ENCODE measurements at regions of chr9 and their contacts with region 1.

Region 1: GRCh38 chr9:120693700-120694008 is 20.6 kb downstream of the MEGF9 start:
- DNase-seq: no peak
- H3K4me3 Mint-ChIP-seq: no peak overlapping the region
- H3K27ac Mint-ChIP-seq: no peak overlapping the region
- H3K4me1 Mint-ChIP-seq: peaks cover 36% of the 10 kb centered on the region
- H3K27me3 Mint-ChIP-seq: no peaks in the 10 kb centered on the region

Region 2: GRCh38 chr9:120714088-120714845 is 20.6 kb after region 1 on chr9 and contains the start of gene MEGF9:
- CTCF ChIA-PET with region 1: no interaction called
- POLR2A ChIA-PET with region 1: no interaction called
- intact Hi-C with region 1: loop called (anchors 1 kb)
- DNase-seq: peak; percentile 98
- H3K4me3 Mint-ChIP-seq: peak within 1 kb of the TSS; percentile 84
- H3K27ac Mint-ChIP-seq: peak within 1 kb of the TSS; percentile 65
- H3K4me1 Mint-ChIP-seq: peaks cover 31% of the 10 kb centered on the region
- H3K27me3 Mint-ChIP-seq: no peaks in the 10 kb centered on the region
- total RNA-seq, gene MEGF9: 4.4 to 4.6 TPM